Naive thymus-derived CD4-positive, alpha-beta T cell (primary cell): ENCODE measurements at regions of chr22 and their contacts with region 1.

Region 1: DNA sequence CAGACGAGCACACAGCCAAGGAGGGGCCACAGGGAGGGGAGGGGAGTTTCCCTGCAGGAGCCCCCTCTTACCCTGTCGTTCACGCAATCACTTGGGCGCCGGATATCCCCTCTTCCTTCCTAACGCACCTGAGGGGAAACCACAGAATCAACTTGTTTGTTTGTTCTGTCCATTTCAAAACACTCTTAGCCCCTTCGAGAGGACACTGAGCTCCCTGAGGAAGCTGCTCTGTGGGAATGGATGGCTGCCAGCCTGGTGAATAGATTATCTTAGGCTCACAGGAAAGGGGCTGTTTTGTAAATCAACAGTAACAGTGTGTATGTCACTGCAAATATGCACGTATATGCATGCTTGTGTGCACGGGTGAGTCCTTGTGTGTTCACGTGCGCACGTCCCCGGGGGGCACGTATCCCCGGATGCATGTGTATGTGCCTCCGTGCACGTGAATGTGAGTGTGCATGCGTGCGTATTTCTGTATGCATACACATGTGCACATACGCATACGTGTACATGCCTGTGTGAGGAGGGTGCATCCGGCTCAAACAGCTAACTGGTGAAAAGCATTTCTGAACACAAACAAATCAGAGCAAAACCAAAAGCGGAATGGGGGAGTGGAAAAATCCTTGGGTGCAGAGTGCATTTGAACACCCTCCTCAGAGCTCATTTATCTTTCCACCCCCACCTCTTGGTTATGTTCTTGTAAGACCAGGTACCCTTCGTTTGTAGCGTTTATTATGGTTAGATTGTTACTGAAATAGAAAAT is 7.2 kb downstream of the ARSA start:
- DNase-seq: peak; percentile 61 to 95 (median 88)
- ATAC-seq: peak; percentile 88
- H3K4me3 ChIP-seq: peak overlapping the region; percentile 68
- H3K4me3 Mint-ChIP-seq: peak overlapping the region; percentile 81 to 97 (median 93)
- H3K27ac ChIP-seq: peak overlapping the region; percentile 93
- H3K27ac Mint-ChIP-seq: peak overlapping the region; percentile 93 to 100 (median 99)
- H3K4me1 ChIP-seq: peaks cover 17 to 27% of the 10 kb centered on the region in 2 donors
- H3K4me1 Mint-ChIP-seq: peaks cover 10 to 40% (median 33%) of the 10 kb centered on the region in 7 donors
- H3K27me3 ChIP-seq: no peaks in the 10 kb centered on the region
- H3K27me3 Mint-ChIP-seq: no peaks in the 10 kb centered on the region

Region 2: GRCh38 chr22:50250555-50251476 is 370.0 kb before region 1 on chr22 and contains the start of gene HDAC10:
- CTCF ChIA-PET with region 1: interaction called, 10 read pairs
- POLR2A ChIA-PET with region 1: interaction called, 24 read pairs
- intact Hi-C with region 1: loop called in 1 of 2 experiments (anchors 1 kb)
- DNase-seq: peak; percentile 60 to 86 (median 71)
- ATAC-seq: peak; percentile 78
- H3K4me3 ChIP-seq: peak within 1 kb of the TSS; percentile 71
- H3K4me3 Mint-ChIP-seq: peak within 1 kb of the TSS; percentile 61 to 88 (median 80)
- H3K27ac ChIP-seq: peak within 1 kb of the TSS; percentile 71
- H3K27ac Mint-ChIP-seq: peak within 1 kb of the TSS in 7 of 9 donors; percentile 31 to 80 (median 65)
- H3K4me1 ChIP-seq: peaks cover 25 to 38% of the 10 kb centered on the region in 2 donors
- H3K4me1 Mint-ChIP-seq: peaks cover 4 to 26% (median 17%) of the 10 kb centered on the region in 7 donors
- H3K27me3 ChIP-seq: no peaks in the 10 kb centered on the region
- H3K27me3 Mint-ChIP-seq: no peaks in the 10 kb centered on the region
- total RNA-seq, gene HDAC10: 95.9 to 139 (median 105) TPM

Region 3: DNA sequence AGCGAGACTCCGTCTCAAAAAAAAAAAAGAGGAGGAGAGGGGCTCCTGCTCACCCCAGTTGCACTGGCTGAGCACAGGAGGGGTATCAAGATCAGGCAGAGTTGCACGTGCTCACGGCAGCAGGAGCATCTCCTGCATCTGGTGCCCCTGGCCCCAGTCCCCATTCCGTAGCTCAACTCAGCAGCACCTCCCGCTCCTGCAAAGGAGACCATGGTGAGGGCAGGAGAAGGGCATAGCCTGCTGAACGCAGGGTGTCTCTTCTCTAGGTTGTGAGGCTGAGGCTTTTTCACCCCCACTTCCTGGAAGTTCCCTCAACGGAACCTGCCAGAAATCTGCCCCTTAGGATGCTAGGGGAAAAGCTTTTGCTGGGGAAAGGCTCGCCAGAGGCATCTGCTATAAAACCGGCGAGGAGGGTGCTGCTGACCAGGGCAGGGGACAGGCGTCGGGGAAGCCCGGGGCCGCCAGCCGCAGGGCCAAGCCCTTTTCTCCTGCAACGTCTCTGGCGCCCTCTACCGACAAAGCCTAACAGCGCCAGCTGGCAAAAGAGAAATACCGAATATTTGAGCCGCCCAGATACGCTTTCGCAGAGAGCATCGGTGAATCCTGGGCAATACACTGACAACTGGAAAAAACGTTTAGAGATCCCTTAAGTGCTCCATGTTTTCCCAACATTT is 278.7 kb before region 1 on chr22:
- CTCF ChIA-PET with region 1: no interaction called
- POLR2A ChIA-PET with region 1: interaction called, 4 read pairs
- intact Hi-C with region 1: loop called (anchors 1 to 2 kb)
- DNase-seq: peak; percentile 76 to 93 (median 86)
- ATAC-seq: peak; percentile 71
- H3K4me3 ChIP-seq: peak overlapping the region; percentile 86
- H3K4me3 Mint-ChIP-seq: peak overlapping the region; percentile 73 to 91 (median 88)
- H3K27ac ChIP-seq: peak overlapping the region; percentile 96
- H3K27ac Mint-ChIP-seq: peak overlapping the region in 7 of 9 donors; percentile 82 to 96 (median 93)
- H3K4me1 ChIP-seq: peaks cover 13 to 16% of the 10 kb centered on the region in 2 donors
- H3K4me1 Mint-ChIP-seq: peaks cover 0 to 18% (median 9%) of the 10 kb centered on the region in 7 donors
- H3K27me3 ChIP-seq: no peaks in the 10 kb centered on the region
- H3K27me3 Mint-ChIP-seq: no peaks in the 10 kb centered on the region

Region 4: GRCh38 chr22:50435291-50436014 is 185.3 kb before region 1 on chr22:
- CTCF ChIA-PET with region 1: no interaction called
- POLR2A ChIA-PET with region 1: no interaction called
- intact Hi-C with region 1: no loop called
- DNase-seq: no peak
- ATAC-seq: no peak
- H3K4me3 ChIP-seq: no peak overlapping the region
- H3K4me3 Mint-ChIP-seq: no peak overlapping the region
- H3K27ac ChIP-seq: no peak overlapping the region
- H3K27ac Mint-ChIP-seq: peak overlapping the region in 2 of 9 donors; percentile 41 to 65
- H3K4me1 ChIP-seq: no peaks in the 10 kb centered on the region
- H3K4me1 Mint-ChIP-seq: peaks cover 0 to 3% (median 0%) of the 10 kb centered on the region in 7 donors
- H3K27me3 ChIP-seq: no peaks in the 10 kb centered on the region
- H3K27me3 Mint-ChIP-seq: no peaks in the 10 kb centered on the region

Region 5: GRCh38 chr22:50498322-50498890 is 122.4 kb before region 1 on chr22:
- CTCF ChIA-PET with region 1: interaction called, 4 read pairs
- POLR2A ChIA-PET with region 1: interaction called, 4 read pairs
- intact Hi-C with region 1: loop called in 1 of 2 experiments (anchors 2 kb)
- DNase-seq: peak in 8 of 9 donors; percentile 60 to 76 (median 70)
- ATAC-seq: peak; percentile 92
- H3K4me3 ChIP-seq: no peak overlapping the region
- H3K4me3 Mint-ChIP-seq: no peak overlapping the region
- H3K27ac ChIP-seq: no peak overlapping the region
- H3K27ac Mint-ChIP-seq: no peak overlapping the region
- H3K4me1 ChIP-seq: no peaks in the 10 kb centered on the region
- H3K4me1 Mint-ChIP-seq: peaks cover 3 to 10% (median 9%) of the 10 kb centered on the region in 7 donors
- H3K27me3 ChIP-seq: no peaks in the 10 kb centered on the region
- H3K27me3 Mint-ChIP-seq: peaks cover 0 to 5% (median 0%) of the 10 kb centered on the region in 5 donors

Region 6: DNA sequence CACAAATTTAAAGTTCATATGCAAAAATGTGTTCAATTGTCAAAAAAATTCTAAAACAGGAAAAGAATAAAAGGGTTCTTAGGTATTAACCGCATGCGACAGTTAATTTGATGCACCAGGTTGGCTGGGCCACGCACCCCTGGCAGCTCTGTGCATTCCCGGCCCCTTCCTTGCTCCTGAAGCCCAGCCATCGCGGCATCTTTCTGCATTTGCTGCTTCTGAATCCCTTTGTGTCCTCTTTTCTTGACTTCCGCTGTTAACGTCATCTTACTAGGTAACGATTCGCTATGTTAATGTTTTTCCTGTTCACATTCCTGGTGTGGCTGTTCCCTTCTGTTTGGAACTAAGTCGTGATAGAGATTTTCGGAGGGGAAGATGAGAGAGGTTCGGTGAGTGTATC is 83.0 kb before region 1 on chr22:
- CTCF ChIA-PET with region 1: interaction called, 9 read pairs
- POLR2A ChIA-PET with region 1: interaction called, 39 read pairs
- intact Hi-C with region 1: loop called in 1 of 2 experiments (anchors 1 kb)
- DNase-seq: no peak
- ATAC-seq: no peak
- H3K4me3 ChIP-seq: no peak overlapping the region
- H3K4me3 Mint-ChIP-seq: peak overlapping the region in 4 of 10 donors; percentile 5 to 65 (median 56)
- H3K27ac ChIP-seq: peak overlapping the region; percentile 99
- H3K27ac Mint-ChIP-seq: peak overlapping the region; percentile 74 to 100 (median 99)
- H3K4me1 ChIP-seq: peaks cover 14 to 24% of the 10 kb centered on the region in 2 donors
- H3K4me1 Mint-ChIP-seq: peaks cover 29 to 79% (median 41%) of the 10 kb centered on the region in 7 donors
- H3K27me3 ChIP-seq: no peaks in the 10 kb centered on the region
- H3K27me3 Mint-ChIP-seq: peaks cover 0 to 2% (median 0%) of the 10 kb centered on the region in 5 donors

Region 7: DNA sequence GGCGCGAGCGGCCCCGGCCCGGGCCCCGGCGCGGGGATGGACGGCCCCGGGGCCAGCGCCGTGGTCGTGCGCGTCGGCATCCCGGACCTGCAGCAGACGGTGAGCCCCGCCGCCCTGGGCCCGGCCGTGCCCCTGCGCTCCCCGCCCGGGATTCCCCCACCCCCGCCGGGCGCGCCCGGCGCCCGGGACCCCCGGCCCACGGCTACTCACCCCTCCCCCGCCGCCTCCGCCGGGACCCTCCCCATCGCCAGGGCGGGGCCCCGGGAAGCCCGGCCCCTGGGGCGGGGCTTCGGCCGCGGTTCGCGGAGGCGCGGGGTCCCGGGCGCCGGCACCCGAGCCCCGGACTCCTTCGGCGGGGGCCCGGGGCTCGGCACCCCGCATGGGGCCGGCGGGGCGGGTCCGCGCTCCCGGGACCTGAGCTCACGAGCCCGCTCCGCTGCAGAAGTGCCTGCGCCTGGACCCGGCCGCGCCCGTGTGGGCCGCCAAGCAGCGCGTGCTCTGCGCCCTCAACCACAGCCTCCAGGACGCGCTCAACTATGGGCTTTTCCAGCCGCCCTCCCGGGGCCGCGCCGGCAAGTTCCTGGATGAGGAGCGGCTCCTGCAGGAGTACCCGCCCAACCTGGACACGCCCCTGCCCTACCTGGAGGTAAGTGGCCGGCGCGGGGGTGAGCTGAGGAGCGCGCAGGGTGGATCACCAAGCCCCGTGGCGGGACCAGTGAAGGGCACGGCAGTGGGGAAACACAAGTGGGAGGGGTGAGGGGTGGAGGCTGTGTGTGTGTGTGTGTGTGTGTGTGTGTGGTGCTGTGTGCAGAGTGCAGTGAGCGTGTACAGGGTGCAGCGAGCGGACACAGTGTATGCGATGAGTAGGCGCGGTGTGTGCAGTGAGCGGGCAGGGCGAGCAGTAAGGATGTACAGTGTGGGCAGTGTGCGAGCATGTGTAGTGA is 54.1 kb after region 1 on chr22:
- CTCF ChIA-PET with region 1: no interaction called
- POLR2A ChIA-PET with region 1: interaction called, 7 read pairs
- intact Hi-C with region 1: loop called in 1 of 2 experiments (anchors 5 kb)
- DNase-seq: peak in 4 of 9 donors; percentile 17 to 48 (median 26)
- ATAC-seq: peak; percentile 35
- H3K4me3 ChIP-seq: no peak overlapping the region
- H3K4me3 Mint-ChIP-seq: peak overlapping the region; percentile 8 to 85 (median 70)
- H3K27ac ChIP-seq: no peak overlapping the region
- H3K27ac Mint-ChIP-seq: peak overlapping the region in 1 of 9 donors; percentile 79
- H3K4me1 ChIP-seq: peaks cover 8 to 17% of the 10 kb centered on the region in 2 donors
- H3K4me1 Mint-ChIP-seq: peaks cover 4 to 23% (median 16%) of the 10 kb centered on the region in 7 donors
- H3K27me3 ChIP-seq: peaks cover 0 to 3% of the 10 kb centered on the region in 2 donors
- H3K27me3 Mint-ChIP-seq: peaks cover 11 to 48% (median 35%) of the 10 kb centered on the region in 5 donors